ENCODE measurements at regions of chr10 and their contacts with region 1.

Region 1: GRCh38 chr10:119737827-119738226 is 12.0 kb downstream of the INPP5F start:
- DNase-seq: no peak
- H3K4me3 Mint-ChIP-seq: no peak overlapping the region
- H3K27ac Mint-ChIP-seq: no peak overlapping the region
- H3K4me1 Mint-ChIP-seq: peaks cover 22% of the 10 kb centered on the region
- H3K27me3 Mint-ChIP-seq: no peaks in the 10 kb centered on the region

Region 2: GRCh38 chr10:119165171-119166110 is 572.4 kb before region 1 on chr10 and contains the start of gene SFXN4:
- CTCF ChIA-PET with region 1: no interaction called
- POLR2A ChIA-PET with region 1: no interaction called
- DNase-seq: peak; percentile 80
- H3K4me3 Mint-ChIP-seq: peak within 1 kb of the TSS; percentile 85
- H3K27ac Mint-ChIP-seq: peak within 1 kb of the TSS; percentile 96
- H3K4me1 Mint-ChIP-seq: peaks cover 37% of the 10 kb centered on the region
- H3K27me3 Mint-ChIP-seq: no peaks in the 10 kb centered on the region
- total RNA-seq, gene SFXN4: 19.0 to 20.1 TPM

Region 3: DNA sequence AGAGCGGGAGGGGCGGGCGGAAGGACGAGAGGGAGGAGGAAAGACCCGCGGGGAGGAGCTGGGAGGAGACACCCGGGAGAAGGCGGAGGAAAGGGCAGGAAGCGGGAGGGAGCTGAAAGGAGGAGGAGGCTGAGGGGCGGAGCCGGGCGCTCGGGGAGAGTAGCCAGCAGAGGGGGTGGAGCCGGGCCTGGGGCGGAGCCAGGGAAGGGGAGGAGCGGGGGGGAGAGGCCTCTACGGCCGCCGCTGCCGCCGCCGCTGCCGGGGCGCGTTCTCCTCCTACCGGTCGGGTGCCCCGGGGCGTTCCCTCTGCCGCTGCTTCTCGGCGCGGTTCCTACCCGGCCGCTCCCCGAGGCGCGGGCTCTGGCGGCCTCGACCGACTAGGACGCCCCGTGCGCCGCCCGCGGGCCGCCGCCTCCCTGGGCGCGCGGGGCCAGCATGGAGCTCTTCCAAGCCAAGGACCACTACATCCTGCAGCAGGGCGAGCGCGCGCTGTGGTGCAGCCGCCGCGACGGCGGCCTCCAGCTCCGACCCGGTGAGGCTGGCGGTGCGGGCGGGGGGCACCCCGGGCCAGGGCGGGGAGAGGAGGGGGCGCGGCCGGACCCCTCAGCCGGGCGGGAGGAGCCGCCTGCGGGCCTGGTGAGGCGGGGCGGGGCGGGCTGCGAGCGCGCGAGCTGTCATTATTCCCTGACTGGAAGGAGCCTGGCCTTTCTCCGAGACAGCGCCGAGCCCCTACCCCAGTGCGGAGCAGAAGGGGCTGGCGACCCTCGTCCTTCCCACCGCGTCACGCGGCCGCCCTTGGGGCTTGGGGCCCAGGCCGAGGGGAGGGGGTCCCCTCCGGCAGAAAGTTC is 11.8 kb before region 1 on chr10 and contains the start of gene INPP5F:
- CTCF ChIA-PET with region 1: interaction called, 11 read pairs
- POLR2A ChIA-PET with region 1: no interaction called
- DNase-seq: peak; percentile 99
- H3K4me3 Mint-ChIP-seq: peak within 1 kb of the TSS; percentile 83
- H3K27ac Mint-ChIP-seq: peak within 1 kb of the TSS; percentile 79
- H3K4me1 Mint-ChIP-seq: peaks cover 39% of the 10 kb centered on the region
- H3K27me3 Mint-ChIP-seq: no peaks in the 10 kb centered on the region
- total RNA-seq, gene INPP5F: 11.1 to 12.3 TPM